Heart left ventricle (tissue), 16 donors: ENCODE measurements at regions of chr20 and their contacts with region 1.

Region 1: GRCh38 chr20:52332230-52332629 is 140.7 kb upstream of the ZFP64 start:
- DNase-seq: no peak
- ATAC-seq: no peak
- H3K4me3 ChIP-seq: no peak overlapping the region
- H3K27ac ChIP-seq: no peak overlapping the region
- H3K4me1 ChIP-seq: no peaks in the 10 kb centered on the region
- H3K27me3 ChIP-seq: peaks cover 0 to 10% (median 0%) of the 10 kb centered on the region in 9 donors
- CTCF ChIP-seq: no peak
- POLR2A ChIP-seq: no peak

Region 2: GRCh38 chr20:52399352-52399751 is 67.1 kb after region 1 on chr20:
- intact Hi-C with region 1: loop called in 1 of 10 experiments (anchors 10 kb)
- DNase-seq: no peak
- ATAC-seq: no peak
- H3K4me3 ChIP-seq: no peak overlapping the region
- H3K27ac ChIP-seq: no peak overlapping the region
- H3K4me1 ChIP-seq: no peaks in the 10 kb centered on the region
- H3K27me3 ChIP-seq: no peaks in the 10 kb centered on the region
- CTCF ChIP-seq: no peak
- POLR2A ChIP-seq: no peak